K562 (cell line): ENCODE measurements at regions of chr11 and their contacts with region 1.

Region 1: GRCh38 chr11:10808553-10809372 is at the start of gene EIF4G2:
- DNase-seq: peak; percentile 97 to 99 (median 98)
- ATAC-seq: peak; percentile 96
- H3K4me3 ChIP-seq: peak within 1 kb of the TSS; percentile 94
- H3K27ac ChIP-seq: peak within 1 kb of the TSS; percentile 98
- H3K4me1 ChIP-seq: peaks cover 11 to 13% of the 10 kb centered on the region in 2 experiments; a peak in 4 of 5 replicates
- H3K27me3 ChIP-seq: no peaks in the 10 kb centered on the region
- CTCF ChIP-seq: no peak; a peak in 1 of 6 replicates
- EP300 ChIP-seq: peak; percentile 12; the same call in 1 of the 2 replicates
- POLR2A ChIP-seq: peak; percentile 100
- RAD21 ChIP-seq: peak in 1 of 2 experiments; percentile 9; a peak in 1 of 4 replicates
- polyA plus RNA-seq, gene EIF4G2: 206 to 683 TPM

Region 2: DNA sequence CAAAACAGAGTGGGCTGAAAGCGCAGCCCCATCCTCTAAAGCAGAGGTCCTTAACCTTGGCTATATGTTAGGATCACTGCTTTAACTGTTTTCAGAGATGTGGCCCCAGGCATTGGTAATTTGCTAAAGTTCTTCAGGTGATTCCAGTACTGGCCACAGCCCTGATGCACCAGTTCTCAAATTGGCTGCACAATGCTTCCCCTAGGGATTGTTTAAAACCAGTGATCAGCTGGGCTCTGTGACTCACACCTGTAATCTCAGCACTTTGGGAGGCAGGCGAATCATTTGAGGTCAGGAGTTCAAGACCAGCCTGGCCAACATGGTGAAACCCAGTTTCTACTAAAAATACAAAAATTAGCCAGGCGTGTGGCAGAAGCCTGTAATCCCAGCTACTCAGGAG is 106.8 kb before region 1 on chr11:
- CTCF ChIA-PET with region 1: no interaction called
- POLR2A ChIA-PET with region 1: no interaction called
- in situ Hi-C with region 1: no loop called
- intact Hi-C with region 1: no loop called
- DNase-seq: no peak
- ATAC-seq: no peak
- H3K4me3 ChIP-seq: no peak overlapping the region
- H3K27ac ChIP-seq: no peak overlapping the region
- H3K4me1 ChIP-seq: no peaks in the 10 kb centered on the region
- H3K27me3 ChIP-seq: peaks cover 0 to 7% of the 10 kb centered on the region in 2 experiments; a peak in 1 of 5 replicates
- CTCF ChIP-seq: no peak
- EP300 ChIP-seq: no peak
- POLR2A ChIP-seq: no peak
- RAD21 ChIP-seq: no peak

Region 3: GRCh38 chr11:10792398-10792975 is 16.3 kb before region 1 on chr11:
- CTCF ChIA-PET with region 1: no interaction called
- POLR2A ChIA-PET with region 1: interaction called, 105 read pairs
- in situ Hi-C with region 1: no loop called
- intact Hi-C with region 1: no loop called
- DNase-seq: peak; percentile 88 to 92 (median 90)
- ATAC-seq: peak; percentile 93
- H3K4me3 ChIP-seq: no peak overlapping the region
- H3K27ac ChIP-seq: no peak overlapping the region
- H3K4me1 ChIP-seq: peaks cover 8 to 9% of the 10 kb centered on the region in 2 experiments; a peak in 4 of 5 replicates
- H3K27me3 ChIP-seq: peaks cover 0 to 8% of the 10 kb centered on the region in 2 experiments; a peak in 2 of 5 replicates
- CTCF ChIP-seq: peak; percentile 97 to 98 (median 97)
- EP300 ChIP-seq: no peak
- POLR2A ChIP-seq: no peak
- RAD21 ChIP-seq: peak; percentile 95 to 98

Region 4: DNA sequence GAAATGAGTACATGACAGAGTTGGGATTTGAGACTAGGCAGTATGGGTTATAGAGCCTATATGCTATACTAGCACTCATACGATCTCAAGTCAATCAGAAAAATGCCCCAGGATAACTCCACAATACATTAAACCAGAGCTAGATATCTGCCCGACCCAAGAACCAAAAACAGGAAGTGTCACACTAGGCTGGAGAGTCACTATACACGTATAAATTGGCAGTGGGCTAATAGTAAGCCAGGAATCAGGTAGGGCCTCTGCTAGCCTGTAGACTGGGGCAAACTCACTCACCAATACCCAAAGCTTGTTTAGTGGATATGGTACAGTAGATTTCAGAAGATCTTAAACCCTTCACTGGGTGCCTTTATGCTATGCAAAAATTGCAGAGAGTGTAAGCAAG is 16.1 kb after region 1 on chr11:
- CTCF ChIA-PET with region 1: no interaction called
- POLR2A ChIA-PET with region 1: interaction called, 37 read pairs
- in situ Hi-C with region 1: no loop called
- intact Hi-C with region 1: no loop called
- DNase-seq: peak in 1 of 4 experiments; percentile 30
- ATAC-seq: peak; percentile 72
- H3K4me3 ChIP-seq: no peak overlapping the region
- H3K27ac ChIP-seq: peak overlapping the region; percentile 3; the same call in 1 of the 3 replicates
- H3K4me1 ChIP-seq: peaks cover 0 to 26% of the 10 kb centered on the region in 2 experiments; a peak in 4 of 5 replicates
- H3K27me3 ChIP-seq: no peaks in the 10 kb centered on the region
- CTCF ChIP-seq: no peak
- EP300 ChIP-seq: no peak
- POLR2A ChIP-seq: no peak
- RAD21 ChIP-seq: no peak

Region 5: DNA sequence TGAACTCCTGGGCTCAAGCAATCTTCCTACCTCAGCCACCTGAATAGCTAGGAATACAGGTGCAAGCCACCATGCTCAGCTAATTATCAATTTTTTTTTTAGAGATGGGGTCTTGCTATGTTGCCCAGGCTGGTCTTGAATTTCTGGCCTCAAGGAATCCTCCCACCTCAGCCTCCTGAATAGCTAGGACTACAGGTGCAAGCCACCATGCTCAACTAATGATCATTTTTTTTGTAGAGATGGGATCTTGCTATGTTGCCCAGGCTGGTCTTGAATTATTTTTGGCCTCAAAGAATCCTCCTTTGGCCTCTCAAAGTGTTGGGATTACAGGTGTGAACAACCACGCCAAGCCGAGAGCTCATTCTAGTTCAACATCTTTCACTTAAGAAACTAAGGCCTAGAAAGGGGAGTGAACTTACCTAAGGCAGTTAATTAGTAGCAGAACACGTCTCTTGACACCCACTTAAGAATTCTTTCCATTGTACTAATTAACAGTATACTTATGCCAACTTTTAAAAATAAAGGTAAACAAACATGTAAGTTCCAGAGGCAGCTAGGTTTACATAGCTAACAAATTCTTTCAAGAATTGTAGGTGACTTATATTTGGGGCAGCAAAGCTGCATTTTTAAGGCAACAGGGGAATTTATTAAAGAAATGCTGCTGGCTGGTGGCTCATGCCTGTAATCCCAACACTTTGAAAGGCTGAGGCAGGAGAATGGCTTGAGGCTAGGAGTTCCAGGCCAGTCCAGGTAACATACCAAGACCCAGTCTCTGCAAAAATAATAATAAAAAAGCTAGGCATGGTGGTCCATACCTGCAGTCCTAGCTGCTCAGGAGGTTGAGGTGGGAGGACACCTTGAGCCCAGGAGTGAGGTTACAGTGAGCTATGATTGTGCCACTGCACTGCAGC is 39.5 kb after region 1 on chr11:
- CTCF ChIA-PET with region 1: no interaction called
- POLR2A ChIA-PET with region 1: interaction called, 14 read pairs
- in situ Hi-C with region 1: no loop called
- intact Hi-C with region 1: no loop called
- DNase-seq: no peak
- ATAC-seq: no peak
- H3K4me3 ChIP-seq: no peak overlapping the region
- H3K27ac ChIP-seq: no peak overlapping the region
- H3K4me1 ChIP-seq: no peaks in the 10 kb centered on the region
- H3K27me3 ChIP-seq: no peaks in the 10 kb centered on the region
- CTCF ChIP-seq: no peak
- EP300 ChIP-seq: no peak
- POLR2A ChIP-seq: no peak
- RAD21 ChIP-seq: no peak

Region 6: GRCh38 chr11:10899121-10899830 is 90.5 kb after region 1 on chr11:
- CTCF ChIA-PET with region 1: no interaction called
- POLR2A ChIA-PET with region 1: interaction called, 82 read pairs
- in situ Hi-C with region 1: no loop called
- intact Hi-C with region 1: loop called (anchors 1 kb)
- DNase-seq: peak; percentile 72 to 94 (median 80)
- ATAC-seq: peak; percentile 86
- H3K4me3 ChIP-seq: peak overlapping the region; percentile 1; the same call in 1 of the 2 replicates
- H3K27ac ChIP-seq: peak overlapping the region; percentile 98
- H3K4me1 ChIP-seq: peaks cover 46 to 67% of the 10 kb centered on the region in 2 experiments
- H3K27me3 ChIP-seq: no peaks in the 10 kb centered on the region
- CTCF ChIP-seq: no peak
- EP300 ChIP-seq: peak; percentile 85
- POLR2A ChIP-seq: peak; percentile 57
- RAD21 ChIP-seq: no peak

Region 7: GRCh38 chr11:10926801-10927211 is 118.0 kb after region 1 on chr11:
- CTCF ChIA-PET with region 1: no interaction called
- POLR2A ChIA-PET with region 1: interaction called, 13 read pairs
- in situ Hi-C with region 1: no loop called
- intact Hi-C with region 1: loop called (anchors 2 kb)
- DNase-seq: no peak
- ATAC-seq: no peak
- H3K4me3 ChIP-seq: no peak overlapping the region
- H3K27ac ChIP-seq: no peak overlapping the region
- H3K4me1 ChIP-seq: peaks cover 0 to 12% of the 10 kb centered on the region in 2 experiments; a peak in 2 of 5 replicates
- H3K27me3 ChIP-seq: no peaks in the 10 kb centered on the region
- CTCF ChIP-seq: no peak
- EP300 ChIP-seq: no peak
- POLR2A ChIP-seq: no peak
- RAD21 ChIP-seq: no peak